ENCODE measurements at regions of chr14 and their contacts with region 1.

Region 1: GRCh38 chr14:45112889-45113781 is 21.1 kb downstream of the FKBP3 start:
- DNase-seq: no peak
- ATAC-seq: peak; percentile 70
- H3K4me3 Mint-ChIP-seq: no peak overlapping the region
- H3K27ac Mint-ChIP-seq: peak overlapping the region; percentile 72
- H3K4me1 Mint-ChIP-seq: peaks cover 29% of the 10 kb centered on the region
- H3K27me3 Mint-ChIP-seq: no peaks in the 10 kb centered on the region

Region 2: DNA sequence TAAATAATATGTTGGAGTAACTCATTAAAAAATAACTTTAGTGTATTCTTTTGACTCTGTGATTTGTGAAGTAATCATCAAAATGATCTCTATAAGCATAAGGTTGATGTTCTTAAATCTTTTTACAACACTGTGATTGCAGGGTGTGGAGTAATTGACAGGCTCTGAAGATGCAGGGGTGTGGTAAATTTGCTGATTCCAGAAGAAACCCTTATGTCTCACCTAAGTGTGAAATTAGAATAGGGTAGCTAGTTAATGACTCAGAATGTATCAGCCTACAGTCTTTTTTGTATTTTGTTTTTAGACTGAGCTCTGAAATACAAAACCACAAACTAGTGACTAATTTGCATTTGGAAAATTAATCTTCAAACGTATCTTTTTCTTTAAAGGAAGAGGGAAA is 23.3 kb before region 1 on chr14:
- CTCF ChIA-PET with region 1: interaction called, 6 read pairs
- POLR2A ChIA-PET with region 1: interaction called, 3 read pairs
- intact Hi-C with region 1: loop called (anchors 1 kb)
- DNase-seq: peak; percentile 27
- ATAC-seq: peak; percentile 95
- H3K4me3 Mint-ChIP-seq: peak overlapping the region; percentile 43
- H3K27ac Mint-ChIP-seq: peak overlapping the region; percentile 88
- H3K4me1 Mint-ChIP-seq: peaks cover 72% of the 10 kb centered on the region
- H3K27me3 Mint-ChIP-seq: no peaks in the 10 kb centered on the region

Region 3: GRCh38 chr14:45128963-45129629 is 16.0 kb after region 1 on chr14:
- CTCF ChIA-PET with region 1: interaction called, 15 read pairs
- POLR2A ChIA-PET with region 1: interaction called, 7 read pairs
- intact Hi-C with region 1: loop called (anchors 1 kb)
- DNase-seq: no peak
- ATAC-seq: no peak
- H3K4me3 Mint-ChIP-seq: no peak overlapping the region
- H3K27ac Mint-ChIP-seq: no peak overlapping the region
- H3K4me1 Mint-ChIP-seq: peaks cover 18% of the 10 kb centered on the region
- H3K27me3 Mint-ChIP-seq: no peaks in the 10 kb centered on the region

Region 4: GRCh38 chr14:45169906-45170305 is 56.8 kb after region 1 on chr14:
- CTCF ChIA-PET with region 1: no interaction called
- POLR2A ChIA-PET with region 1: no interaction called
- intact Hi-C with region 1: no loop called
- DNase-seq: no peak
- ATAC-seq: no peak
- H3K4me3 Mint-ChIP-seq: no peak overlapping the region
- H3K27ac Mint-ChIP-seq: no peak overlapping the region
- H3K4me1 Mint-ChIP-seq: no peaks in the 10 kb centered on the region
- H3K27me3 Mint-ChIP-seq: no peaks in the 10 kb centered on the region

Region 5: DNA sequence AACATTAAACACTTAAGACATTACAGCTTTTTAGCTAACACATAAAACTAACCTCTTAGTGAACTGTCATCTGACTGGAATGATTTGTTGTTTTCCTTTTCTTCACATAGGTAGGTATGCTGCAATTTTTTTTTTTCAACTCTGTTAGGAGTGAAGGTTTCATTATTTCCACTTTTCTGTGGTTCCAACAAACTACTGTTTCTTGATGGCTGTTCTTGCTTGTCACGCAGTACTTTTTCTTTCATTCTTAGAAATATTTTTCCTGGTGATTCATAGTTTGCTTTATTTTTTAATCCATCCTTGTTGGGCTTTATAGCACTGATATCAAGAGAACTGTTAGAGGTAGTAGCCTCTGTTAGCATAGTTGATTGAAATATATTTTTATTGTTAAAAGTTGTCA is 133.6 kb after region 1 on chr14:
- CTCF ChIA-PET with region 1: interaction called, 3 read pairs
- POLR2A ChIA-PET with region 1: no interaction called
- intact Hi-C with region 1: loop called in 1 of 2 experiments (anchors 1 kb)
- DNase-seq: no peak
- ATAC-seq: peak; percentile 87
- H3K4me3 Mint-ChIP-seq: no peak overlapping the region
- H3K27ac Mint-ChIP-seq: no peak overlapping the region
- H3K4me1 Mint-ChIP-seq: peaks cover 19% of the 10 kb centered on the region
- H3K27me3 Mint-ChIP-seq: no peaks in the 10 kb centered on the region